Psoas muscle (tissue), 8 donors: ENCODE measurements at regions of chr12 and their contacts with region 1.

Region 1: DNA sequence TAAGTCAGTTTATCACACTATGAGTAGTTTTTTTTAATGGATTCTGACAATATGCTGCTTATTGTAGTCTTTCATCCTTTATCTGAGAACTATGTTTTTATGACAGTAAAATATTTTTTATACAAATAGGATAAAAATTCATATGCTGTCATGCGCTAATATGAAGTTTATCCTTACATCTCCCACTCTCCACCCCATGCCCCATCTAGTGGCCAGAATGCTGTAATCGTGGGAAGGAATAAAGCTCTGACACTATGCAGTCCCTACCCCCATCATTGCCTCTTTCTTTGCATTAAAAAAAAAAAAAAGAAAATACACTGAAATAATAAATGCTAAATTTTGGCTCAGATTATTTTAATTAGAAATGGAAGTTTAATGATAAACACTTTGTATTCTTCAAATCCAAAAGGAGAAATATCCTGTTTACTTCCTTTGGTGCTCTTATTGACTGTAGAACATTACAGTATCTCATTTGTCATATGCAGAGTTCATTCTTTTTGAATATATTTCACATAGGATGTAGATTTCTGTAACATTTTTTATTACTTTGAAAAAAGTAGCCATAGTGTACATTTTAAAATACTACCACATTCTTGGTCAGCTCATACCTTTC is 145.9 kb upstream of the SLCO1C1 start:
- DNase-seq: no peak
- ATAC-seq: peak in 2 of 4 donors; percentile 51 to 74
- H3K4me3 ChIP-seq: no peak overlapping the region
- H3K27ac ChIP-seq: no peak overlapping the region
- H3K4me1 ChIP-seq: no peaks in the 10 kb centered on the region
- H3K27me3 ChIP-seq: no peaks in the 10 kb centered on the region
- CTCF ChIP-seq: peak; percentile 47

Region 2: GRCh38 chr12:20463913-20464524 is 85.2 kb before region 1 on chr12:
- intact Hi-C with region 1: loop called in 1 of 2 experiments (anchors 10 kb)
- DNase-seq: no peak
- ATAC-seq: no peak
- H3K4me3 ChIP-seq: no peak overlapping the region
- H3K27ac ChIP-seq: no peak overlapping the region
- H3K4me1 ChIP-seq: peaks cover 6% of the 10 kb centered on the region
- H3K27me3 ChIP-seq: no peaks in the 10 kb centered on the region
- CTCF ChIP-seq: peak; percentile 54

Region 3: GRCh38 chr12:20477672-20478071 is 71.5 kb before region 1 on chr12:
- intact Hi-C with region 1: no loop called
- DNase-seq: no peak
- ATAC-seq: no peak
- H3K4me3 ChIP-seq: no peak overlapping the region
- H3K27ac ChIP-seq: no peak overlapping the region
- H3K4me1 ChIP-seq: no peaks in the 10 kb centered on the region
- H3K27me3 ChIP-seq: no peaks in the 10 kb centered on the region
- CTCF ChIP-seq: no peak

Region 4: GRCh38 chr12:20931894-20932293 is 382.7 kb after region 1 on chr12:
- intact Hi-C with region 1: no loop called
- DNase-seq: no peak
- ATAC-seq: no peak
- H3K4me3 ChIP-seq: no peak overlapping the region
- H3K27ac ChIP-seq: no peak overlapping the region
- H3K4me1 ChIP-seq: no peaks in the 10 kb centered on the region
- H3K27me3 ChIP-seq: no peaks in the 10 kb centered on the region
- CTCF ChIP-seq: no peak